Caco-2 (cell line): ENCODE measurements at regions of chr12 and their contacts with region 1.

Region 1: DNA sequence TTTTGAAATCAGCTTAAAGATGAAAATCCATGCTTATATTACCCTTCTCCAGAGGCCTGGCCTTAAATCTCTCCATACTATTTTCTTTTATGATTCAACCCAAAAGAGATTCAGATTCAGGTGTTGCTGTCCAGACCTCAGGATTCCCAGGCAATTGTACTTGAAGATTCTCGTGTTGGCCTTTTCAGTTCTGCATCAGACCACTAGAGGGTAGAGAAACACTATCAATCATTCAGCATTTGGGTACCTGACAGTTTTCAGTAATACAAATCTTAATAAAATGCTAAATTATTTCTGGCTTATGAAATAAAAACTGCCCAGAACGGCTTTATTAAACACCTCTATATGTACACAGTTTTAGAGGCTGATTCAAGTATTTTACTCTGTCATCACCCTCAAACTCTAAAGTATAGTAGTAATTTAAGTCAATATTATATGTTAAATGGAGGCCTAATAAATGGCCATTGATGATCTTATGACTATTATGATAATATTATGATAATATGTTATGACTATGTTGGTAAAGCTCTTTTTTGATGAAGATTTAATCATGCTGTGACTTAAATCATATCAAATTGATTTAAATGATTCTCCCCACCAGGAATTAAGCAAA is 301.1 kb downstream of the DUSP6 start:
- DNase-seq: peak in 1 of 2 experiments; percentile 61
- H3K4me3 ChIP-seq: no peak overlapping the region
- H3K4me3 Mint-ChIP-seq: no peak overlapping the region
- H3K27ac Mint-ChIP-seq: no peak overlapping the region
- H3K4me1 ChIP-seq: no peaks in the 10 kb centered on the region
- H3K4me1 Mint-ChIP-seq: no peaks in the 10 kb centered on the region
- H3K27me3 ChIP-seq: no peaks in the 10 kb centered on the region
- H3K27me3 Mint-ChIP-seq: no peaks in the 10 kb centered on the region
- CTCF ChIP-seq: peak; percentile 83 to 85

Region 2: GRCh38 chr12:89019408-89020120 is 31.6 kb before region 1 on chr12:
- CTCF ChIA-PET with region 1: no interaction called
- POLR2A ChIA-PET with region 1: no interaction called
- intact Hi-C with region 1: loop called (anchors 1 kb)
- DNase-seq: peak; percentile 80 to 82
- H3K4me3 ChIP-seq: peak overlapping the region; percentile 36
- H3K4me3 Mint-ChIP-seq: no peak overlapping the region
- H3K27ac Mint-ChIP-seq: no peak overlapping the region
- H3K4me1 ChIP-seq: peaks cover 11% of the 10 kb centered on the region
- H3K4me1 Mint-ChIP-seq: peaks cover 10% of the 10 kb centered on the region
- H3K27me3 ChIP-seq: no peaks in the 10 kb centered on the region
- H3K27me3 Mint-ChIP-seq: no peaks in the 10 kb centered on the region
- CTCF ChIP-seq: peak; percentile 83 to 85

Region 3: GRCh38 chr12:89084751-89085150 is 33.6 kb after region 1 on chr12:
- CTCF ChIA-PET with region 1: no interaction called
- POLR2A ChIA-PET with region 1: no interaction called
- intact Hi-C with region 1: loop called (anchors 5 kb)
- DNase-seq: no peak
- H3K4me3 ChIP-seq: no peak overlapping the region
- H3K4me3 Mint-ChIP-seq: no peak overlapping the region
- H3K27ac Mint-ChIP-seq: no peak overlapping the region
- H3K4me1 ChIP-seq: peaks cover 38% of the 10 kb centered on the region
- H3K4me1 Mint-ChIP-seq: peaks cover 22% of the 10 kb centered on the region
- H3K27me3 ChIP-seq: no peaks in the 10 kb centered on the region
- H3K27me3 Mint-ChIP-seq: no peaks in the 10 kb centered on the region
- CTCF ChIP-seq: no peak

Region 4: DNA sequence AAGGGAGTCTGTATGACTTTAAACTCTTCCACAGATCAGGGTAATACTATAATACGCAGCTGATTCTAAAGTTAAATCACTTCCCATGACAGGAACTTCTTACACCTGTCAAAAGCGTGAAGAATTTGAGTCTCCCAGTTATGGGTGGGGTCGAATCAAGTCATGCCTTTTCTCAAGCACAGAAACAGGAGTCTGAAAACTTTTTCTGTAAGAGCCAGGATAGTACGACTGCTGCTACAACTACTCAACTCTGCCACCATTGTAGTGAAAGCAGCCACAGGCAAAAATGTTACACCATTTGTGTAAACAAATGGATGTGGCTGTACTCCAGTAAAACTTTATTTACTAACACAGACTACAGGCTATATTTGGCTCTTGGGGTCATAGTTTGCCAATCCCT is 210.8 kb after region 1 on chr12:
- CTCF ChIA-PET with region 1: no interaction called
- POLR2A ChIA-PET with region 1: no interaction called
- intact Hi-C with region 1: loop called (anchors 10 kb)
- DNase-seq: no peak
- H3K4me3 ChIP-seq: no peak overlapping the region
- H3K4me3 Mint-ChIP-seq: no peak overlapping the region
- H3K27ac Mint-ChIP-seq: no peak overlapping the region
- H3K4me1 ChIP-seq: peaks cover 27% of the 10 kb centered on the region
- H3K4me1 Mint-ChIP-seq: peaks cover 7% of the 10 kb centered on the region
- H3K27me3 ChIP-seq: no peaks in the 10 kb centered on the region
- H3K27me3 Mint-ChIP-seq: no peaks in the 10 kb centered on the region
- CTCF ChIP-seq: no peak

Region 5: DNA sequence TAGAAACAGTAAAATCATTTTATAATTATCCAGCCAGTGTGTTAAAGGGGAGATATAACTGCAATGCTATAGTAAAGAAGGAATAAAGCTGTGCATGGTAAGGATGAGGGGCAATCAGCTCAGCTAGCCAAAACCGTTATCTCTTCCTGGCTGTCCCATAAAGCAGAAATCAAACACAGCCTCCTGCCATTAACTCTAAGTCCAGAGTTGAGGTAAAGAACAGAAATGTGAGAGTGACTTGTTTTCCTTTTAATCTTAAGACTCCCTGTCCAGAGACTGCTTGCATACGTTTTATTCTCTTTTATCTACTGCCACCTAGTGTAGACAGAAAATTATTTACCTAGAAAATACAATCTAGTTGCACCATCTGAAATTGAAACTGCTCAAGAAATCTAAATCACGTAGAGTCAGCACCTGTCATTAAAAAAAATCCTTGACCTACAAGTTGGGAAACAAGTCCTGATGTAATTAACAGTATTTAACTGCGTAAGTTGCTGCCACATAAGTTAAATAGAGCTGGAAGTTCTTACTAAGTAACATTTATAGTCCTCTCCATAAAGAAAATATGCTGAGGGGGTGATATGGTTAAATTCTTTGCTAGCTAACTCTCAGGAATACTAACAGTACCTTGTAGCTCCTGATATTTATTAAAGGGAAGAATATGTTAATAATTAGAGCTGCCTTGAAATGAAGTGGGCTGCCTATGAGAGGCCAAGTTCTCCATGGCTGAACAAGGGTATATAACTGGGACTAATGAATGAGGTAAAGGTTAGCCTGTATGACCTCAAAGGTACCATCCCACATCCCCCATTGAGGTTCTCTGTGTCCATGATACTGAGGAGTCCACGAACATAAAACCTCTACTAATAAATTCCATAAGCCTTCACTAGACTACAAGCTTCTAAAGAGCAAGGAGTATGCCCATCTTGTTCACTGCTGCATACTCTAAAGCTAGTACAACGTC is 410.8 kb after region 1 on chr12:
- CTCF ChIA-PET with region 1: no interaction called
- POLR2A ChIA-PET with region 1: no interaction called
- intact Hi-C with region 1: loop called (anchors 1 kb)
- DNase-seq: peak in 1 of 2 experiments; percentile 43
- H3K4me3 ChIP-seq: no peak overlapping the region
- H3K4me3 Mint-ChIP-seq: no peak overlapping the region
- H3K27ac Mint-ChIP-seq: no peak overlapping the region
- H3K4me1 ChIP-seq: no peaks in the 10 kb centered on the region; the same call in 1 of the 2 replicates
- H3K4me1 Mint-ChIP-seq: peaks cover 11% of the 10 kb centered on the region
- H3K27me3 ChIP-seq: no peaks in the 10 kb centered on the region
- H3K27me3 Mint-ChIP-seq: no peaks in the 10 kb centered on the region
- CTCF ChIP-seq: peak; percentile 23 to 49